ENCODE measurements at regions of chr11 and their contacts with region 1.

Region 1: DNA sequence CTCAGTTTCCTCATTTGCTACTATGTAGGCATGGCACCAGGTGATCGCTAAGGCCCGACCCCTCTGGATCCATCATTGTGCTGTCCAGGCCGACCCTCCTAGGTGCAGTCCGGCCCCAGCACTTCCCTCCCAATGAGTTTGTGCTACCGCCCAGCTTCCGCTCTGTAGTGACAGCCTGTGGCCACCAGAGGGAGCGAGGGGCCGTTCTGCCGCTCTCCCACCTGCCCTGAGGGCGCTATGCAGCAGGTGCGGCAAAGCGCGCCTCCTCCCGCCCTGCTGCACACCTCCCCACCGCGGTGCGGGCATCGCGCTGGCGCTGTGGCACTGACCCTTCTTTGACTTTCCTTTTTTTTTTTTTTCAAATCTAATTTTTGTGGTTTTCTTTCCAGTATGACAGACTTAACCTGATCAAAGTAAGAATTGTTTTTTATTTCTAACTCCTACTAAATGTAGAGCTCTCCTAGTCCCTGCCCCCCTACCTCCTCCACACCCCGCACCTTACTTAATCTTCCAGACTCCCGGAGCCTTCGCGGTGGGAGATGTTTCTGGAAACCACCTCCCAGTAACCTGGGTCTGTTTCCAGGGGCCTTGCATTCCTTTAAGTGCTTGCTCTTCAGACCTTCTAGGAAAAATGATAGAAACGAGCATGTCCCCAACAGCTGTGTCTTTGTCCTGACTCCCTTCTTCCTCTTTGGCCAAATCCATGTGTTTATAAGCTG is 73.7 kb downstream of the SCN3B start:
- DNase-seq: peak; percentile 89
- H3K4me3 ChIP-seq: no peak overlapping the region
- H3K27ac ChIP-seq: no peak overlapping the region
- H3K4me1 ChIP-seq: peaks cover 6 to 19% of the 10 kb centered on the region in 2 experiments; a peak in 2 of 4 replicates
- H3K27me3 ChIP-seq: no peaks in the 10 kb centered on the region
- CTCF ChIP-seq: peak; percentile 87
- EP300 ChIP-seq: no peak
- RAD21 ChIP-seq: peak; percentile 77

Region 2: GRCh38 chr11:123054301-123055065 is 526.2 kb before region 1 on chr11:
- CTCF ChIA-PET with region 1: no interaction called
- POLR2A ChIA-PET with region 1: no interaction called
- DNase-seq: peak; percentile 75
- H3K4me3 ChIP-seq: no peak overlapping the region; a peak in 1 of 4 replicates
- H3K27ac ChIP-seq: peak overlapping the region in 1 of 2 experiments; percentile 99; a peak in 2 of 4 replicates
- H3K4me1 ChIP-seq: peaks cover 9 to 24% of the 10 kb centered on the region in 2 experiments; a peak in 3 of 4 replicates
- H3K27me3 ChIP-seq: no peaks in the 10 kb centered on the region
- CTCF ChIP-seq: peak; percentile 80
- EP300 ChIP-seq: no peak
- RAD21 ChIP-seq: peak; percentile 82

Region 3: GRCh38 chr11:123421589-123421988 is 159.1 kb before region 1 on chr11:
- CTCF ChIA-PET with region 1: no interaction called
- POLR2A ChIA-PET with region 1: no interaction called
- DNase-seq: no peak
- H3K4me3 ChIP-seq: no peak overlapping the region
- H3K27ac ChIP-seq: no peak overlapping the region
- H3K4me1 ChIP-seq: no peaks in the 10 kb centered on the region
- H3K27me3 ChIP-seq: no peaks in the 10 kb centered on the region
- CTCF ChIP-seq: no peak
- EP300 ChIP-seq: no peak
- RAD21 ChIP-seq: no peak

Region 4: GRCh38 chr11:123478352-123478987 is 102.2 kb before region 1 on chr11:
- CTCF ChIA-PET with region 1: interaction called, 12 read pairs
- POLR2A ChIA-PET with region 1: no interaction called
- DNase-seq: peak; percentile 76
- H3K4me3 ChIP-seq: no peak overlapping the region
- H3K27ac ChIP-seq: peak overlapping the region in 1 of 2 experiments; percentile 21; a peak in 1 of 4 replicates
- H3K4me1 ChIP-seq: peaks cover 10 to 28% of the 10 kb centered on the region in 2 experiments; a peak in 3 of 4 replicates
- H3K27me3 ChIP-seq: no peaks in the 10 kb centered on the region
- CTCF ChIP-seq: peak; percentile 79
- EP300 ChIP-seq: no peak
- RAD21 ChIP-seq: peak; percentile 93

Region 5: GRCh38 chr11:123519055-123519796 is 61.5 kb before region 1 on chr11:
- CTCF ChIA-PET with region 1: interaction called, 39 read pairs
- POLR2A ChIA-PET with region 1: no interaction called
- DNase-seq: peak; percentile 55
- H3K4me3 ChIP-seq: no peak overlapping the region
- H3K27ac ChIP-seq: peak overlapping the region in 1 of 2 experiments; percentile 11; a peak in 1 of 4 replicates
- H3K4me1 ChIP-seq: peaks cover 0 to 16% of the 10 kb centered on the region in 2 experiments; a peak in 1 of 4 replicates
- H3K27me3 ChIP-seq: no peaks in the 10 kb centered on the region
- CTCF ChIP-seq: no peak
- EP300 ChIP-seq: no peak
- RAD21 ChIP-seq: no peak

Region 6: DNA sequence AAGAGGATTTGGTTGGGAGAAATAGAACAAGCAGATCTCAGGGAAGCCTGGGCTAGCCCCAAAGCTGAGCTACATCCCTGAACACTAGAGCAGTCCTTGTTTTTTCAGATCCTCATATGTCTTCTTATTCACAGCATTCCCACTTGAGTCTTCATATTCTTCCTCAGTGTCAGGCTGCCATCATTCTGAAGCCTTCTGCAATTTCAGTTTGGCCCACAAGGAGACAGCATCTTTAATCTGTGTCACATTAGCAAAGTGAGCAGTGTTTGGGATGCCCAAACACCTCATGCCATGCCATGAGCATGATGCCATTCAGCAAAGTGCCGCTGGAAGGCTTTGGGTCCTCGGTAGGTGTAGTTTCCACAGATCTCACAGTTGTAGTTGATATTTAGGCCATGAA is 17.1 kb after region 1 on chr11:
- CTCF ChIA-PET with region 1: interaction called, 10 read pairs
- POLR2A ChIA-PET with region 1: interaction called, 5 read pairs
- DNase-seq: no peak
- H3K4me3 ChIP-seq: no peak overlapping the region
- H3K27ac ChIP-seq: no peak overlapping the region
- H3K4me1 ChIP-seq: no peaks in the 10 kb centered on the region
- H3K27me3 ChIP-seq: no peaks in the 10 kb centered on the region
- CTCF ChIP-seq: peak; percentile 9; the same call in 1 of the 2 replicates
- EP300 ChIP-seq: no peak
- RAD21 ChIP-seq: no peak

Region 7: DNA sequence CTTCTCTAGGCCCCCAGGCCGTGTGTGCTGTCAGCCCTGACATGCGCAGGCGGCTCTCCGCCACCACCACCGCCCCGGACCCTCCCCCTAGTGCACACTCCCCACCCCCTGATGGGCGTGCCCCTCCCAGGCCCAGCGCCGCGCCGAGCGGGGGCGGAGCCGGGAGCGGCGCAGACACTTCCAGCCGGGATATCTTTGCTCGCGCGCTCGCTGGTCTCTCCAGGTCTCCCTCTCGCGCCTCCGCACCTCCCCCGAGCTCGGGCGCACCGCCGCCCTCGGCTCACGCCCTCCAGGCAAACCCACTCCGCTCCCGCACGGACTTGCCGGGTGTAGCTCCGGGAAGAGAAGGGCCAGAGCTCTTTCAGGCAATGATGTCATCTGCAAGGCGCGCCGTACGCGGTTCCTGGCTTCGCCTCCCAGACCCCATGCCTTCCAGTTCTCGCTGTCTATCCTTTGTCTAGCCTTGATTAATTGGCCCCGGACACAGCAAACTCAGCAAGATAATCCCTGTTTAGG is 73.9 kb after region 1 on chr11 and contains the start of gene SCN3B:
- CTCF ChIA-PET with region 1: interaction called, 31 read pairs
- POLR2A ChIA-PET with region 1: no interaction called
- DNase-seq: peak; percentile 99
- H3K4me3 ChIP-seq: peak within 1 kb of the TSS; percentile 72 to 76
- H3K27ac ChIP-seq: peak within 1 kb of the TSS in 1 of 2 experiments; percentile 90; a peak in 2 of 4 replicates
- H3K4me1 ChIP-seq: peaks cover 0 to 21% of the 10 kb centered on the region in 2 experiments; a peak in 2 of 4 replicates
- H3K27me3 ChIP-seq: peaks cover 15% of the 10 kb centered on the region; the same call in 1 of the 2 replicates
- CTCF ChIP-seq: no peak
- EP300 ChIP-seq: 0 out of 4 replicates have a peak, but pooled peaks of 1 of the 2 experiments have one; percentile 6
- RAD21 ChIP-seq: no peak
- polyA plus RNA-seq, gene SCN3B: 0.23 and 0.44 TPM in 2 replicates

Region 8: GRCh38 chr11:123719452-123719851 is 138.7 kb after region 1 on chr11:
- CTCF ChIA-PET with region 1: interaction called, 16 read pairs
- POLR2A ChIA-PET with region 1: no interaction called
- DNase-seq: no peak
- H3K4me3 ChIP-seq: no peak overlapping the region
- H3K27ac ChIP-seq: no peak overlapping the region; a peak in 1 of 4 replicates
- H3K4me1 ChIP-seq: no peaks in the 10 kb centered on the region
- H3K27me3 ChIP-seq: peaks cover 7% of the 10 kb centered on the region; the same call in 1 of the 2 replicates
- CTCF ChIP-seq: no peak
- EP300 ChIP-seq: no peak
- RAD21 ChIP-seq: no peak

Measured in SK-N-SH (cell line).